ENCODE measurements at regions of chr10 and their contacts with region 1.

Region 1: GRCh38 chr10:34522546-34522945 is 292.6 kb downstream of the PARD3 start:
- DNase-seq: peak; percentile 92
- ATAC-seq: no peak
- H3K4me3 ChIP-seq: no peak overlapping the region
- H3K27ac ChIP-seq: peak overlapping the region; percentile 84
- H3K4me1 ChIP-seq: peaks cover 77% of the 10 kb centered on the region
- H3K27me3 ChIP-seq: no peaks in the 10 kb centered on the region
- CTCF ChIP-seq: peak; percentile 99

Region 2: GRCh38 chr10:34121781-34122628 is 400.5 kb before region 1 on chr10:
- CTCF ChIA-PET with region 1: no interaction called
- POLR2A ChIA-PET with region 1: interaction called, 4 read pairs
- intact Hi-C with region 1: loop called (anchors 10 kb)
- DNase-seq: peak; percentile 87
- ATAC-seq: peak; percentile 33
- H3K4me3 ChIP-seq: peak overlapping the region; percentile 2; the same call in 1 of the 2 replicates
- H3K27ac ChIP-seq: peak overlapping the region; percentile 49
- H3K4me1 ChIP-seq: peaks cover 33% of the 10 kb centered on the region
- H3K27me3 ChIP-seq: no peaks in the 10 kb centered on the region
- CTCF ChIP-seq: no peak

Measured in PC-3 (cell line).